ENCODE measurements at regions of chr1 and their contacts with region 1.

Region 1: GRCh38 chr1:101484689-101485338 is 248.0 kb downstream of the S1PR1 start:
- DNase-seq: no peak
- ATAC-seq: no peak
- H3K4me3 Mint-ChIP-seq: no peak overlapping the region
- H3K27ac Mint-ChIP-seq: no peak overlapping the region
- H3K4me1 Mint-ChIP-seq: no peaks in the 10 kb centered on the region
- H3K27me3 Mint-ChIP-seq: peaks cover 7% of the 10 kb centered on the region

Region 2: GRCh38 chr1:101474039-101474665 is 10.7 kb before region 1 on chr1:
- CTCF ChIA-PET with region 1: interaction called, 13 read pairs
- POLR2A ChIA-PET with region 1: no interaction called
- DNase-seq: no peak
- ATAC-seq: no peak
- H3K4me3 Mint-ChIP-seq: no peak overlapping the region
- H3K27ac Mint-ChIP-seq: no peak overlapping the region
- H3K4me1 Mint-ChIP-seq: peaks cover 9% of the 10 kb centered on the region
- H3K27me3 Mint-ChIP-seq: no peaks in the 10 kb centered on the region

Region 3: DNA sequence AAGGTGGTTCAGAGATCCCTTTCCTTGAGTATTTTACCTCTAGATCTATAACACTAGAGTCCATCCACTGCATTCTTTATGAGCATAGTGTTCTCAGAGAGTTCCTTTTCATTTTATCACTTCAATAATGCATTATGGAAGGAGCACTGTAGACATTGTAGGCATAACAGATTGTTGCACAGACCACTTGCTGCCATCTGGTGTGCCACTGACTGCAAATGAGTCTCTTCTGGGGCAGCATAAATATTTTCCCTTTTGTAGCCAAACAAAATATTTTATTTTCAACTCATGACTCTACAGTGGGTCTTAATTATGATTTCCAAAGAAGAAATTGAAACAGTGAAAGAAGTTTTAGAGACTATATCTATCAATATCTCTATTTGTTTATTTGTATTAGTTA is 221.6 kb after region 1 on chr1:
- CTCF ChIA-PET with region 1: no interaction called
- POLR2A ChIA-PET with region 1: no interaction called
- DNase-seq: no peak
- ATAC-seq: no peak
- H3K4me3 Mint-ChIP-seq: no peak overlapping the region
- H3K27ac Mint-ChIP-seq: no peak overlapping the region
- H3K4me1 Mint-ChIP-seq: no peaks in the 10 kb centered on the region
- H3K27me3 Mint-ChIP-seq: peaks cover 2% of the 10 kb centered on the region

Measured in activated CD8-positive, alpha-beta T cell treated with anti-CD3 and anti-CD28 coated beads, Interleukin-2, amount 10 ng/mL, durations not matched to agents 7 days and 5 days (primary cell).